Esophagus muscularis mucosa (tissue), 4 donors: ENCODE measurements at regions of chr9 and their contacts with region 1.

Region 1: GRCh38 chr9:24257726-24258125 is 288.0 kb downstream of the IZUMO3 start:
- DNase-seq: no peak
- H3K4me3 ChIP-seq: no peak overlapping the region
- H3K27ac ChIP-seq: no peak overlapping the region
- H3K4me1 ChIP-seq: peaks cover 0 to 8% (median 0%) of the 10 kb centered on the region in 4 donors
- H3K27me3 ChIP-seq: no peaks in the 10 kb centered on the region
- CTCF ChIP-seq: no peak
- EP300 ChIP-seq: no peak
- POLR2A ChIP-seq: no peak

Region 2: GRCh38 chr9:24210641-24211040 is 47.1 kb before region 1 on chr9:
- intact Hi-C with region 1: loop called (anchors 10 kb)
- DNase-seq: no peak
- H3K4me3 ChIP-seq: no peak overlapping the region
- H3K27ac ChIP-seq: no peak overlapping the region
- H3K4me1 ChIP-seq: no peaks in the 10 kb centered on the region
- H3K27me3 ChIP-seq: no peaks in the 10 kb centered on the region
- CTCF ChIP-seq: no peak
- EP300 ChIP-seq: no peak
- POLR2A ChIP-seq: no peak